Ovary (tissue), 10 donors: ENCODE measurements at regions of chr4 and their contacts with region 1.

Region 1: GRCh38 chr4:127965062-127965802 is at the starts of genes ABHD18 and MFSD8:
- DNase-seq: peak; percentile 99 to 100 (median 99)
- H3K4me3 ChIP-seq: peak within 1 kb of the TSS; percentile 86
- H3K27ac ChIP-seq: peak within 1 kb of the TSS; percentile 68 to 97
- H3K4me1 ChIP-seq: peaks cover 2% of the 10 kb centered on the region
- H3K27me3 ChIP-seq: no peaks in the 10 kb centered on the region
- CTCF ChIP-seq: peak in 2 of 3 donors; percentile 64 to 77
- EP300 ChIP-seq: no peak
- POLR2A ChIP-seq: peak; percentile 61
- total RNA-seq, gene ABHD18: 6.3 to 11.3 (median 9.6) TPM
- total RNA-seq, gene MFSD8: 18.1 to 29.7 (median 25.4) TPM

Region 2: GRCh38 chr4:127632420-127633403 is 332.5 kb before region 1 on chr4 and contains the start of gene INTU:
- intact Hi-C with region 1: loop called in 1 of 4 experiments (anchors 10 kb)
- DNase-seq: peak; percentile 89 to 94 (median 94)
- H3K4me3 ChIP-seq: peak within 1 kb of the TSS; percentile 58
- H3K27ac ChIP-seq: peak within 1 kb of the TSS in 1 of 2 donors; percentile 32
- H3K4me1 ChIP-seq: no peaks in the 10 kb centered on the region
- H3K27me3 ChIP-seq: no peaks in the 10 kb centered on the region
- CTCF ChIP-seq: no peak
- EP300 ChIP-seq: no peak
- POLR2A ChIP-seq: no peak
- total RNA-seq, gene INTU: 8.8 to 23.2 (median 13.3) TPM

Region 3: DNA sequence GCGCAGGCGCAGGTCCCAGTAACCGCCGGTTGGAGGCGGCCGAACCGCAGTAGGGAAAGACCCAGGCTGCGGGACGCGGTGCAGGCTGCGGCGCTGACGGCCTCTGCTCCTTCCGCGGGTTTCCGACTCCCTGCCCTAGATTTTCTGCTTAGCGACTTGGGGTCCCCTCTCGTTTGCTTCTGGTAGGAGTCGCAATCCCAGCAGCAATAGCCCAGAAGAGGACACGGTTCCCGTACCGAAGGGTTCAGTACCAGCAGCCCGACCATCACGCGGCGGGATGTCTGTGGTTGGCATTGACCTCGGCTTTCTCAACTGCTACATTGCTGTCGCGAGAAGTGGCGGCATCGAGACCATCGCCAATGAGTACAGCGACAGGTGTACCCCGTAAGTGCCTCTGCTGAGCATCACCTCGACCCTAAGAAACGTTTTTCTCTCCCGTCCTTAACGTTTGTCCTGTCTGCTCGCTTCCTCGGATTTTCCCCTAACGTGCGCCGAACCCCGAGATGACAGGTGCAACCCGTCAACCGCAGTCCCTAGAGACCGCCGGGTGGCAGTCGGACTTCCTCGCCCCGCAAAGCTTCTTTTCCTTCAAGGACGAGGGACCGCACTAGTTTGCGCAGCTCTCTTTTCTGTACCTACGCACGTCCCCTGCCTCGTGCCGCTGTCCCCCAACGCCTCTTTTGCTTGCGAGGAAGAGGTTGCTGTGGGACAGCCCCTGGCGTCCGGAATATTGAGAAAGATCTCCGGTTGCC is 182.8 kb before region 1 on chr4 and contains the start of gene HSPA4L:
- intact Hi-C with region 1: loop called in 2 of 4 experiments (anchors 5 to 10 kb)
- DNase-seq: peak in 3 of 5 donors; percentile 76 to 85 (median 81)
- H3K4me3 ChIP-seq: peak within 1 kb of the TSS; percentile 79
- H3K27ac ChIP-seq: peak within 1 kb of the TSS; percentile 48 to 50
- H3K4me1 ChIP-seq: no peaks in the 10 kb centered on the region
- H3K27me3 ChIP-seq: no peaks in the 10 kb centered on the region
- CTCF ChIP-seq: peak in 2 of 3 donors; percentile 54 to 55
- EP300 ChIP-seq: no peak
- POLR2A ChIP-seq: peak; percentile 82
- total RNA-seq, gene HSPA4L: 2.8 to 12.6 (median 7.7) TPM

Region 4: DNA sequence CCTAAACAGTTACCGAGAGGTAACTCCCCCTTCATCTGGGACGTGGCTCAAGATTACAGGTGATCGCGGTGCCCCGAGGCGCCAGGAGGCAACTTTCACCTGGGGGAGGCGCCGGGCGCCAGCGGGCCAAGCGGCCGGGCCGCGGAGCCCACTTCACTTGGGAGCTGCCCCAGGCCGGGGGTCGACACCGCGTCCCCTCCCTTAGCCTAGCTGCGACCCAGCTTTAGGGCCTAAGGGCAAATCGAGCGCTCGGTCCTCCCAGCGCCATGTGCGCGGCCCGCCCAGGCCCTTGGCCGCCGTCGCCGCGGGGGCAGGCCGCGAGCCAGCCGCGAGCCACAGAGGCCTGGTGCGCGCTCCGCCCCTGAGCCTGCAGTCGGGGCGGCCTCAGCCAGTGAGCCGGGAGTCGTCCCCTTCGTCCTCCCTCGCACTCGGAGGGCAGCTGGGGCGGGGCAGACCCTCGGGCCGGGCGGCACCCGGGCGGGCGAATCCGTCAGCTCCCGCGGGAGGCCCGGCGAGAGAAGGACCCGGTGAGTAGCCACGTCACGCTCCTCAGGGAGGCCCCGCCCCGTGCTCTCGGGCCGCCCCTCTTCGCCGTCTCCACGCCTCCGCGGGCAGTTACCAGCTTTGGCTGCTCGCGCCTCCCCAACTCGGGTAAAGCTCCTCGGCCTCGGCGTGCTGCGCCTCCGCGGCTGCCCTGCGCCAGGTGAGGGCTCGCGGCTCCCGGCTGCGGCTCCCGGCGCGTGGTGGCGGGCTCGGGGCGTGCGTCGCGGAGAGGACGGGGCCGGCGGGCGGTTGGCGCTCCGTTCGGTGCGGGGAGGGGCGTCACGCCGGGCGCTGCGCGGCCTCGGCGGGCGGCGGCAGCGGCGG is 95.7 kb after region 1 on chr4 and contains the start of gene LARP1B:
- intact Hi-C with region 1: loop called in 1 of 4 experiments (anchors 5 kb)
- DNase-seq: peak; percentile 94 to 96 (median 95)
- H3K4me3 ChIP-seq: peak within 1 kb of the TSS; percentile 77
- H3K27ac ChIP-seq: peak within 1 kb of the TSS; percentile 86 to 94
- H3K4me1 ChIP-seq: peaks cover 5% of the 10 kb centered on the region
- H3K27me3 ChIP-seq: no peaks in the 10 kb centered on the region
- CTCF ChIP-seq: peak in 2 of 3 donors; percentile 9 to 12
- EP300 ChIP-seq: no peak
- POLR2A ChIP-seq: peak; percentile 89
- total RNA-seq, gene LARP1B: 15.5 to 27.8 (median 20.3) TPM